IMR-90 (cell line): ENCODE measurements at regions of chr2 and their contacts with region 1.

Region 1: DNA sequence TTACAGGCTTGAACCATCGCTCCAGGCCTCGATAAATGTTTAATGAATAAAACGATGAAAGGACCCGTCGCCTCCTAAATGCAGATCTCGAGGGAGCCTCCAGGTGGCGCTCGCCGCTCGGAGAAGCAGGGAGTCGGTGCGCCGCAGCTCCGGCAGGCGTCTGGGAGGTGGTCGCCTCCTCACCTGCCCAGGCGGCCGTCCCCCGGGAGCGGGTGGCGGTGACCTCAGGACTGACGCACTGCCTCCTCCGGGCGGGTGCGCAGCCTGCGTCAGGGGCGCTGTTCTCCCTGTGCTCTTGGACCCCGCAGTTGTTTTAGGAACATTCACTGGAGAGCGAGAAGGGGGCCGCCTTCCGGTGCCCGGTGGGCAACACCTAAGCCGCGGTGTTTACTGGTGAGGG is 38.6 kb upstream of the POLE4 start:
- DNase-seq: peak; percentile 48
- ATAC-seq: peak; percentile 58
- H3K4me3 ChIP-seq: peak overlapping the region; percentile 42
- H3K27ac ChIP-seq: no peak overlapping the region
- H3K4me1 ChIP-seq: peaks cover 17% of the 10 kb centered on the region
- H3K27me3 ChIP-seq: no peaks in the 10 kb centered on the region
- CTCF ChIP-seq: peak; percentile 83
- POLR2A ChIP-seq: no peak
- RAD21 ChIP-seq: peak; percentile 88

Region 2: GRCh38 chr2:75064691-75065396 is 145.0 kb after region 1 on chr2:
- CTCF ChIA-PET with region 1: interaction called, 5 read pairs
- POLR2A ChIA-PET with region 1: no interaction called
- dilution Hi-C with region 1: no loop called
- in situ Hi-C with region 1: no loop called
- intact Hi-C with region 1: loop called (anchors 2 kb)
- DNase-seq: peak; percentile 58
- ATAC-seq: peak; percentile 74
- H3K4me3 ChIP-seq: no peak overlapping the region; the same call in 1 of the 2 replicates
- H3K27ac ChIP-seq: no peak overlapping the region; the same call in 1 of the 2 replicates
- H3K4me1 ChIP-seq: peaks cover 4% of the 10 kb centered on the region; the same call in 1 of the 2 replicates
- H3K27me3 ChIP-seq: no peaks in the 10 kb centered on the region
- CTCF ChIP-seq: peak; percentile 82
- POLR2A ChIP-seq: no peak
- RAD21 ChIP-seq: peak; percentile 66

Region 3: DNA sequence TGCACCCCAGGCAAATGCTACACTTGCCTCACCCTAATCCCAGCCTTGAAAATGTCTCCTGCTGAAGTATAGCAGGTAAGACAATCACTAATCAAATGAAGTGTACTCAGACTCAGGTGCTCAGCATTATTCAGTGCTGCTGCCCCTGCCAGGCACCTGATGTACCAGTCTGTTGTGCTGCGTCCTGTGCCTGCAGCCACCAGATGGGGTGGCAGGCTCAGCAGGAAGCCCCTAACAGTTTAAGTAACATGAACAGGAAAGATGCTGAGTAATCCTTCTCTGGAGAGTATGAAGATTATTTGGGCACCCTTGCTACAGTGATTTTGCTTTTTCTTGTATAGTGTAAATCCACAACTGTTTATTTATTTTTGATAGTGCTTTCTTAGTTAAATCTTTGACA is 210.3 kb after region 1 on chr2:
- CTCF ChIA-PET with region 1: no interaction called
- POLR2A ChIA-PET with region 1: no interaction called
- dilution Hi-C with region 1: no loop called
- in situ Hi-C with region 1: no loop called
- intact Hi-C with region 1: no loop called
- DNase-seq: no peak
- ATAC-seq: no peak
- H3K4me3 ChIP-seq: no peak overlapping the region
- H3K27ac ChIP-seq: no peak overlapping the region
- H3K4me1 ChIP-seq: peaks cover 2% of the 10 kb centered on the region; the same call in 1 of the 2 replicates
- H3K27me3 ChIP-seq: no peaks in the 10 kb centered on the region
- CTCF ChIP-seq: 0 out of 2 replicates have a peak, but pooled peaks have one; percentile 12
- POLR2A ChIP-seq: no peak
- RAD21 ChIP-seq: peak; percentile 30; the same call in 1 of the 2 replicates

Region 4: DNA sequence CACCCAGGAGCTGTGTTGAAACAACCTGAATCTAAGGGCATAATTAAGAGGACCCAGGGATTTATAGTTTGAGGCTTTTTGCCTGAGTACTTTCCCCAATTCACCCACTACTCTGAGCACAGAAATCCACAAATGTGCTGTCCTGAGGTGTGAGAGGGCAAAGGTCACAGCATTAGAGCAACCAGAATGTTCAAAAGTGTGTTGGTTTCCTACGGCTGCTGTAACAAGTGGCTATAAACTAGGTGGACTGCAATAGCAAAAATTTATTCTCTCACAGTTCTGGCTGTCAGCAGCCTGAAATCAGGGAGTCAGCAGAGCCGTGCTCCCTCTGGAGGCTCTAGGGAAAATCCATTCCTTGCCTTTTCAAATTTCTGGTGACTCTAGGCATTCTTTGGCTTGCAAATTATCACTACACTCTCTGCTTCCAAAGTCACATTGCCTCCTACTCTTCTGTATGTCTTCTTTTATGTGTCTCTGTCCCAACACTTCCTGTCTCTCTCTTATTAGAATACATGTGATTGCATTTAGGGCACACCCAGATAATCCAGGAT is 370.8 kb after region 1 on chr2:
- CTCF ChIA-PET with region 1: no interaction called
- POLR2A ChIA-PET with region 1: no interaction called
- dilution Hi-C with region 1: no loop called
- in situ Hi-C with region 1: no loop called
- intact Hi-C with region 1: loop called (anchors 2 kb)
- DNase-seq: peak; percentile 45
- ATAC-seq: peak; percentile 79
- H3K4me3 ChIP-seq: no peak overlapping the region
- H3K27ac ChIP-seq: no peak overlapping the region
- H3K4me1 ChIP-seq: peaks cover 8% of the 10 kb centered on the region; the same call in 1 of the 2 replicates
- H3K27me3 ChIP-seq: no peaks in the 10 kb centered on the region
- CTCF ChIP-seq: peak; percentile 51
- POLR2A ChIP-seq: no peak
- RAD21 ChIP-seq: peak; percentile 54

Region 5: DNA sequence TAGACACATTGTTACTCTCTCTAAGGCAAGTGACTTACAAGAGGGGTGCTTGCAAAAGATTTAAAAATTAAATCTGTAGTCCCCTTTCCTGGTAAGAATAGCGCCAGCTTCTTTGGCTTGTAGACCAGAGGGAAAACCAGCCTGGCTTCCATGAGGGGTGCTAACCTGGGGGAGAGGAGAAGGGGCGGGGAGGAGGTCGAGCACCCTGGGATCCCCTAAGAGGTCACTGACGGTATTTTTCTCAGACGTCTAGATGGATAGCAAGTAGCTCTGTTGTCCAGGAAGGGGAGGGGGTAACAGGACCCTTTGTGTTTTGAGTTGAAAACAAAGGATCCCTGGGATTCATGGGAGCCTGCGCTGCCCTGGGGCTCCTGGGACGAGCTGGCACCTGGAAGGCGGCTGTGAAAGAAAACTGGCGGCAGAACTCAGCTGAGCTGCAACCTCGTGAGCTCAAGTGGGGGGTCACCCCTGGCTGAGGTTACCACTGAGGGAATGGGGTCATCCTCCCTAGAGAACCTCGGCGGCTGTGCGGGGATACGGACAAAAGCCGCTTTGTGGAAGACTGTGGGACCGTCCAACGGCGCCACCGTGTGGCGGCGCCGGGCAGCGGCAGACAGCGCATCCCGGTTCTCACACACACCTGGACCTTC is 689.0 kb after region 1 on chr2:
- CTCF ChIA-PET with region 1: no interaction called
- POLR2A ChIA-PET with region 1: no interaction called
- dilution Hi-C with region 1: no loop called
- in situ Hi-C with region 1: loop called (anchors 25 kb)
- intact Hi-C with region 1: loop called (anchors 5 kb)
- DNase-seq: peak; percentile 47
- ATAC-seq: peak; percentile 67
- H3K4me3 ChIP-seq: peak overlapping the region; percentile 22; the same call in 1 of the 2 replicates
- H3K27ac ChIP-seq: no peak overlapping the region
- H3K4me1 ChIP-seq: peaks cover 13% of the 10 kb centered on the region
- H3K27me3 ChIP-seq: peaks cover 24% of the 10 kb centered on the region
- CTCF ChIP-seq: peak; percentile 89
- POLR2A ChIP-seq: peak; percentile 34; the same call in 1 of the 2 replicates
- RAD21 ChIP-seq: peak; percentile 95